Vagina (tissue), 2 donors: ENCODE measurements at regions of chr11 and their contacts with region 1.

Region 1: GRCh38 chr11:75241036-75241905 is 697 bp downstream of the TPBGL start:
- DNase-seq: no peak
- H3K4me3 ChIP-seq: peak overlapping the region; percentile 29 to 71
- H3K27ac ChIP-seq: no peak overlapping the region
- H3K4me1 ChIP-seq: peaks cover 10% of the 10 kb centered on the region
- H3K27me3 ChIP-seq: peaks cover 7% of the 10 kb centered on the region
- CTCF ChIP-seq: peak; percentile 23 to 85 (median 74)
- POLR2A ChIP-seq: no peak

Region 2: DNA sequence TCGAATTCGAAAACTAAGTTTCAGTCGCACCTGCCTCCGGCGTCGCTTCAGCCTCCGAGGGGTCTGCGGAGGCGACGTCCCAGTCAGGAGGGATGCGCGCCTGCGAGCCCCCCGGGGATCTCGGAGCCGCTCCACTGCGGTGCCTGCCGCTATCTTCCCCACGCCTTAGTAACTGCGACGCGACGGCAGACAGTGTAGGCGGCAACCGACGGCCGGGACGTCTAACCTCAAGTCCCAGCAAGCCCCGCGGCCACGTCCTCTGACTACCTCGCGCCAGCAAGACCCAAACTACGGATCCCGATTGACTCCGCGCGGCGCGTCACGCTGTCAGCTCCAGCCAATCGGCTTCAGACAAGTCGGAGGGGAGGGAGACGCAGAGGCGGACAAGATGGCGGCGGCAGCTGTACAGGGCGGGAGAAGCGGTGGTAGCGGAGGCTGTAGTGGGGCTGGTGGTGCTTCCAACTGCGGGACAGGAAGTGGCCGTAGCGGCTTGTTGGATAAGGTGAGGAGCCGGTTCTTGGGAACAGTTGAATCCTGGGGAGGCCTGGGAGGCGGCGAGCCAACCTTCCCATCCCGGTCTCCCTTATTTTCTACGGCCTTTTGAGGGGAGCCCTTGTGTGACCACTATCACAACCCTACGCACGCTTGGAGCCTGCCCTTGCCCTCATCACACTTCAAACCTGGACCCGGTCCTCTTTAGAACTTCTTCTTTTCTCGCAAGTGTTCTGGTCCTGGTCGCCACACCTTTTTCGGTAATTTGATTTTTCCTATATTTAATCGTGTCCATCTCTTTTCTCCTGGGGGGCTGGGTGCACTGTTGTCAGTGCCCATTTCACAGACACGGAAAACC is 292.1 kb before region 1 on chr11 and contains the starts of genes SPCS2 and XRRA1:
- intact Hi-C with region 1: loop called (anchors 10 kb)
- DNase-seq: peak; percentile 99
- H3K4me3 ChIP-seq: peak within 1 kb of the TSS; percentile 73 to 74
- H3K27ac ChIP-seq: peak within 1 kb of the TSS; percentile 81
- H3K4me1 ChIP-seq: peaks cover 30% of the 10 kb centered on the region
- H3K27me3 ChIP-seq: no peaks in the 10 kb centered on the region
- CTCF ChIP-seq: no peak
- POLR2A ChIP-seq: peak in 1 of 2 donors; percentile 55
- total RNA-seq, gene SPCS2: 26.0 TPM
- total RNA-seq, gene XRRA1: 9.6 TPM

Region 3: GRCh38 chr11:75022759-75023396 is 218.4 kb before region 1 on chr11:
- intact Hi-C with region 1: loop called (anchors 10 kb)
- DNase-seq: peak in 1 of 2 donors; percentile 74
- H3K4me3 ChIP-seq: no peak overlapping the region
- H3K27ac ChIP-seq: no peak overlapping the region
- H3K4me1 ChIP-seq: no peaks in the 10 kb centered on the region
- H3K27me3 ChIP-seq: no peaks in the 10 kb centered on the region
- CTCF ChIP-seq: peak; percentile 77 to 86 (median 83)
- POLR2A ChIP-seq: no peak

Region 4: GRCh38 chr11:75142714-75143419 is 98.4 kb before region 1 on chr11:
- intact Hi-C with region 1: loop called (anchors 2 kb)
- DNase-seq: no peak
- H3K4me3 ChIP-seq: no peak overlapping the region
- H3K27ac ChIP-seq: no peak overlapping the region
- H3K4me1 ChIP-seq: peaks cover 11% of the 10 kb centered on the region
- H3K27me3 ChIP-seq: no peaks in the 10 kb centered on the region
- CTCF ChIP-seq: no peak
- POLR2A ChIP-seq: no peak

Region 5: GRCh38 chr11:75313513-75314272 is 72.4 kb after region 1 on chr11:
- intact Hi-C with region 1: no loop called
- DNase-seq: no peak
- H3K4me3 ChIP-seq: no peak overlapping the region
- H3K27ac ChIP-seq: peak overlapping the region; percentile 93
- H3K4me1 ChIP-seq: peaks cover 44% of the 10 kb centered on the region
- H3K27me3 ChIP-seq: no peaks in the 10 kb centered on the region
- CTCF ChIP-seq: no peak
- POLR2A ChIP-seq: no peak